ENCODE measurements at regions of chr22 and their contacts with region 1.

Region 1: GRCh38 chr22:26483439-26484359 is at the starts of genes HPS4 and SRRD:
- DNase-seq: peak; percentile 88
- H3K4me3 ChIP-seq: peak within 1 kb of the TSS; percentile 97 to 100
- H3K27ac ChIP-seq: peak within 1 kb of the TSS; percentile 95 to 98
- H3K4me1 ChIP-seq: peaks cover 40% of the 10 kb centered on the region
- H3K27me3 ChIP-seq: no peaks in the 10 kb centered on the region
- CTCF ChIP-seq: peak in 1 of 4 experiments; percentile 30
- POLR2A ChIP-seq: peak; percentile 95
- total RNA-seq, gene HPS4: 25.3 to 83.9 TPM
- total RNA-seq, gene SRRD: 15.2 to 24.4 TPM

Region 2: GRCh38 chr22:26589845-26590736 is 106.4 kb after region 1 on chr22 and contains the start of gene TPST2:
- intact Hi-C with region 1: loop called (anchors 5 kb)
- DNase-seq: peak; percentile 76
- H3K4me3 ChIP-seq: peak within 1 kb of the TSS; percentile 80 to 89
- H3K27ac ChIP-seq: peak within 1 kb of the TSS; percentile 80
- H3K4me1 ChIP-seq: no peaks in the 10 kb centered on the region
- H3K27me3 ChIP-seq: no peaks in the 10 kb centered on the region
- CTCF ChIP-seq: peak in 2 of 4 experiments; percentile 2 to 10
- POLR2A ChIP-seq: peak; percentile 92
- total RNA-seq, gene TPST2: 49.4 to 200 TPM

Measured in prostate gland (tissue), 2 donors.